OCI-LY7 (cell line): ENCODE measurements at regions of chr3 and their contacts with region 1.

Region 1: DNA sequence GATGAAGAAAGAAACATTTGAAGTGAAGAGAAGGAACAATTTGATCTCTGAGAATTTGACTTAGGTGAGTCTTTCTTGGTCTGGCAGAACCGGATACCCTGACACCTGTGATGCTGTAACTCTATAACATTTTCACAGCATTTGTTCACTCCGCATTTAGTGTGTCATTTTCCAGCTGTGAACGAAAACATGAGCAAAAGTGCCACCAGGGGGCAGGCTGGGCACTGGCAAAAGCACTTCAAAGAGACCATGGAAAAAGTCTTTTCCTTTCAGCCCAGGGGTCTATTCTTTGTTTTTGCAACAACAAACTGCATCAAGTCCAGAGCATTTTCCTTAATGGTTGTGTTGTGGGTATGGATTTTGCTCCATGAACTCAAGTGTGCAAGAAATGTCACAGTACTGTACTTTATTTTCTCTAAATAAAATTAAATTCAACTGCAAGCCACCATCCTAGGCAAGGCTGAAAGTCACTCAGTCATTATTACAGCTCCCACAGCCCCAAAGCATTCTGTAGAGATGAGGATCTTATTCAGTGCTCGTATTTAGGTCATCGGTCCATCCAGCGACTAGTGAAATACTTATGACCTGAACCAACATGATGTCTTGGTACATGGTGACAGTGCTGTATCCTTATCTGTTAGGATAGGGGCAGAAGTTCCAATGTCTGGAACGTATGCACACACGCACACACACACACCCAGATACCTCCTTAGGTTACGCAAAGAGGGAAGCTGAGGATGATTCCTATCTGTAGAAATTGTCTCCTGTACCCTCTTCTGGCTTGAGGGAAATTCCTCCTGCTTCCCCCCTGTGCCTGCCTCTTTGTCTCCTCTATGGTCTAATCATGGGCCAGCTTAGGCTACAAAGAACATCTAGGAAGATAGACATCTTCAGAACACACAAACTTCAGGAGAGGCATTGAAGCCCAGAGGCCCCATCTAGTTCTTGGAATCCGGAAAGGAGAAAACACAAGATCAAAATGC is 125.5 kb downstream of the GADL1 start:
- DNase-seq: peak; percentile 73
- H3K4me3 ChIP-seq: no peak overlapping the region
- H3K27ac ChIP-seq: no peak overlapping the region
- H3K4me1 ChIP-seq: no peaks in the 10 kb centered on the region
- CTCF ChIP-seq: peak; percentile 95

Region 2: GRCh38 chr3:31132132-31132769 is 363.3 kb after region 1 on chr3:
- CTCF ChIA-PET with region 1: no interaction called
- POLR2A ChIA-PET with region 1: no interaction called
- intact Hi-C with region 1: loop called (anchors 2 kb)
- DNase-seq: peak; percentile 54
- H3K4me3 ChIP-seq: no peak overlapping the region
- H3K27ac ChIP-seq: no peak overlapping the region
- H3K4me1 ChIP-seq: no peaks in the 10 kb centered on the region
- CTCF ChIP-seq: peak; percentile 83

Region 3: DNA sequence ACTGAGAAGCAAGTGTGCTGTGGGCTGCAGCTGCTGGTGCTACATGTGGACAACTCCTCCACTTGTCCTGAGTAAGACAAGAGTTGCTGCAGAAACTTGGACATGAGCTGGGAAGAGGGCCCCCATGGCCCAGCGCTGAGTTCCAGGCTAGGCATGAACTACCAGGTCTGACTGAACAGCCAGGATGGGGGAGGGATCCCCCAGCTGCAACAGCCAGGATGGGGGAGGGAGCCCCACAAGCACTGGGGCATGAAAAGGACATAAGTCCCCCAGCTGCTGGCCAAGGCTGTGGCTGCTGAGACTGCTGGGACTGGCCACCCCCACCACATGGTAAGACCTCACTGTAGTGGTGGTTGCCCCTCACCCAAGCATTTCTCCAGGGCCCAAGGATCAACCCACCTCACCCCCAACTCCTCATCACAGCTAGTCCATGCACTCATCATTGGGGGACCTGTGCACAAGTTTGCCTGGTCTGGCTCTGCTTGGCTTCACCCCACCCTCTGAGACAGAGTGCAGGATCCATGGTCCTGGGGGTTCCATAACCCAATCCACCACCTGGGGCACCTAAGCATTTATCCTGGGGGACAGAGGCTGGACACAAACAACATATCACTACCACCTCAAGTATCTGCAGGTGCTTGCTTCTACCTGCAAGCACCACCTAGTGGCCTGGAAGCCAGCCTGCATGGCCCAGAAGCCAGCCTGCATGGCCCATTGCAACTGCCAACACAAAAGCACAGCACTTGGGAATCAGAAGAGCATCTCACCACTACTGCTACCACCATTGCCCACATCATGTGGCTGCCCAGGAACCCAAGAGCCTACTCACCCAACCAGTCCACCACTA is 679.3 kb after region 1 on chr3:
- CTCF ChIA-PET with region 1: no interaction called
- POLR2A ChIA-PET with region 1: no interaction called
- intact Hi-C with region 1: loop called (anchors 2 kb)
- DNase-seq: peak; percentile 68
- H3K4me3 ChIP-seq: no peak overlapping the region
- H3K27ac ChIP-seq: no peak overlapping the region
- H3K4me1 ChIP-seq: peaks cover 48% of the 10 kb centered on the region
- CTCF ChIP-seq: peak; percentile 89